ENCODE measurements at regions of chr6 and their contacts with region 1.

Region 1: DNA sequence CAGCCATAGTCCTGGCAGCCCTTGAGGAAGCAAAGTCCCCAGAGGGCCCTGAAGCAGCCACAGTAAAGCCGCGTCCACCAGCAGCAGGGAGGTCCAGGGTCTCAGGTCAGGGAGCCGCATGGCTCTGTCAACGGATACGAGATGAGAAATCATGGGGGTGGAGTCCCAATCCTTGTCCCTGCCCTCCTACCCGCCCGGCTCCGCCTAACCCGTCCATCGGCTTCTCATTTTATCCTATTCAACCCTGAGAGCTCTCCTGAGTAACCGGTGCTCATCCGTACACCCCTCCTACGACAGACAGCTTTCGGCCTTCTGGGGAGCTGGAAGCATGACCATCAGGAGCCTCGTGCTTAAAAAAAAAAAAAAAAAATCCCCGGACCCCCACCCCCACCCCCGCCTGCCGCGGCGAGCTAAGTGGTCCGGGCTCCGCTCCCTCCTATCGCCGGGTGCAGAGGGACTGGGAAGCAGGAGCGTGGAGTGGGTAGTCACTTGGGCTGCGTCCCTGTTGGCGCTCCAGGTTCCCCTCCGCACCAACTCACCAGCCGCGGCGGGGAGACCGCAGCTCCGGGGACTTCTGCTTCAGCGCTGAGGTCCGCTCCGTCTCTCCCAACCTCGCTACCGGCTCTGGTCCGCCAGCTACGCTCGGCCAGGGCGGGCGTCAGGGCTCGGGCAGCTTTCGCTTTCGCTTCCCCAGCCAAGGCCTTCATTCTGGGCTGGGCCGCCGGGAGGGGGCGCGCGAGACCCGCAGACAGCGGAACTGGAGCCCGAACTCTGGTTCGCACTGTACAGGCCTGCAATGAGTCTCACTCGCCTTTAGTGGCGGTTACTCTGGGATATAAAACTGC is at the start of gene TAP2:
- DNase-seq: peak; percentile 98
- H3K4me3 Mint-ChIP-seq: peak within 1 kb of the TSS; percentile 73
- H3K27ac Mint-ChIP-seq: peak within 1 kb of the TSS; percentile 91
- H3K4me1 Mint-ChIP-seq: peaks cover 76% of the 10 kb centered on the region
- H3K27me3 Mint-ChIP-seq: no peaks in the 10 kb centered on the region
- total RNA-seq, gene TAP2: 134 to 143 TPM

Region 2: GRCh38 chr6:32203426-32204247 is 634.7 kb before region 1 on chr6:
- CTCF ChIA-PET with region 1: no interaction called
- POLR2A ChIA-PET with region 1: no interaction called
- intact Hi-C with region 1: no loop called
- DNase-seq: no peak
- H3K4me3 Mint-ChIP-seq: no peak overlapping the region
- H3K27ac Mint-ChIP-seq: no peak overlapping the region
- H3K4me1 Mint-ChIP-seq: no peaks in the 10 kb centered on the region
- H3K27me3 Mint-ChIP-seq: no peaks in the 10 kb centered on the region

Region 3: GRCh38 chr6:32825966-32826365 is 12.4 kb before region 1 on chr6:
- CTCF ChIA-PET with region 1: interaction called, 24 read pairs
- POLR2A ChIA-PET with region 1: interaction called, 11 read pairs
- intact Hi-C with region 1: no loop called
- DNase-seq: no peak
- H3K4me3 Mint-ChIP-seq: no peak overlapping the region
- H3K27ac Mint-ChIP-seq: no peak overlapping the region
- H3K4me1 Mint-ChIP-seq: peaks cover 32% of the 10 kb centered on the region
- H3K27me3 Mint-ChIP-seq: no peaks in the 10 kb centered on the region

Region 4: DNA sequence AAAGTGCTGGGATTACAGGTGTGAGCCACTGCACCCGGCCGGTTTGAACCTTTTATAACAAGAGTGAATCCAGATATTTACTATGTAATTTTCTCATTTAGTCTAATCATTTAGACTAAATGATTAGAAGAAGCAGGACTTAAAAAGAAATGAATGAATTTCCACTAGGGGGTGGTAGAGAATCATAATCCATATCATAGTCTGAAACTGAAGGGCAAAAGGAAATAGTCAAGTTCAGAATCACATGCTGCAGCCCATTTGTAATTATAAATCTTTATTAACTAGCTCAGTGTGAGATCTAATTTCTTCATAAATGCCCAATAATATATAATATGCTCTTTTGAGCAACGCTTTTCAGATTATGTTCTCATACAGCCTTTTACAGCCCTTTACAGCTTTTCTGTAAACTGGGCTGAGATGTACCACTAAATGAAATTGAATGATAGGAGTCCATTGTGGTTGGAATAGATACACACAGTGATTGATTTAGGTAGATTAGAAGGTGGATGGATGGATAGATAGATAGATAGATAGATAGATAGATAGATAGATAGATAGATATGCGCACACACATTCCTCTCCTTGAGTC is 47.5 kb after region 1 on chr6:
- CTCF ChIA-PET with region 1: interaction called, 10 read pairs
- POLR2A ChIA-PET with region 1: no interaction called
- intact Hi-C with region 1: no loop called
- DNase-seq: no peak
- H3K4me3 Mint-ChIP-seq: no peak overlapping the region
- H3K27ac Mint-ChIP-seq: no peak overlapping the region
- H3K4me1 Mint-ChIP-seq: peaks cover 11% of the 10 kb centered on the region
- H3K27me3 Mint-ChIP-seq: no peaks in the 10 kb centered on the region

Region 5: GRCh38 chr6:32940656-32941213 is 102.4 kb after region 1 on chr6 and contains the start of gene HLA-DMB:
- CTCF ChIA-PET with region 1: interaction called, 12 read pairs
- POLR2A ChIA-PET with region 1: no interaction called
- intact Hi-C with region 1: no loop called
- DNase-seq: peak; percentile 52
- H3K4me3 Mint-ChIP-seq: peak within 1 kb of the TSS; percentile 77
- H3K27ac Mint-ChIP-seq: peak within 1 kb of the TSS; percentile 87
- H3K4me1 Mint-ChIP-seq: peaks cover 59% of the 10 kb centered on the region
- H3K27me3 Mint-ChIP-seq: no peaks in the 10 kb centered on the region
- total RNA-seq, gene HLA-DMB: 1.6 to 1.9 TPM

Measured in activated CD4-positive, alpha-beta memory T cell treated with anti-CD3 and anti-CD28 coated beads for 36 hours (primary cell).